CD14-positive monocyte (primary cell): ENCODE measurements at regions of chr2 and their contacts with region 1.

Region 1: GRCh38 chr2:55718165-55719008 is 24.7 kb upstream of the PNPT1 start:
- DNase-seq: peak; percentile 13 to 45 (median 40)
- H3K4me3 ChIP-seq: no peak overlapping the region
- H3K4me3 Mint-ChIP-seq: no peak overlapping the region
- H3K27ac ChIP-seq: no peak overlapping the region
- H3K27ac Mint-ChIP-seq: no peak overlapping the region
- H3K4me1 ChIP-seq: no peaks in the 10 kb centered on the region
- H3K4me1 Mint-ChIP-seq: no peaks in the 10 kb centered on the region
- H3K27me3 ChIP-seq: no peaks in the 10 kb centered on the region
- H3K27me3 Mint-ChIP-seq: peaks cover 0 to 11% (median 2%) of the 10 kb centered on the region in 3 donors
- CTCF ChIP-seq: peak; percentile 85

Region 2: DNA sequence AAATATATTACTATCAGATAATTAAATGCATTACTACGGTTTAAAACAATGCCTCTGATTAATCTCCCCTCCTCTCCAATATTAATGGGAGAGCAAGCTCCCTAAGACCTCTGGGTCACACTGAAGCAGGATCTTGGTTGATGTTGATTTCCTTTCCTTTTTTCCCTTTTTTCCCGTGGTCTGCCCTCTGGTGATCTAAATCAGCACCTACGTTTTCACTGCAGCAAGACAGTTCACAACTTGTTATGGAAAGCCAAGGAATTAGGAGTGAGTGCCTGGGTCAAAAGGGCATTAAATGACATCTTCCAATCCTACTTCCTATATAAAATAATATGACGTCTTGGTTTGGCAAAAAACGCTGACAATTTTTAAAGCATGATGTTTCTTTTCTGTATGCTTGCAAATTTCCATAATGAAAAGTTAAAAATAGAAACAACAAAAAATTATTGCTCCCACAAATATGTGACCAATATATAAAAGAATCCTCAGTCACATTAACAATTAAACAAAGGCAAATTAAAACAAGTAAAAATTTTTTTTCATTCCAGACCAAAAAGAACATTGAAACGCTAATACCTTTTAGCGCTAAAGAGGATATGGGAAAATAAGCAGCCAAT is 206.8 kb before region 1 on chr2:
- intact Hi-C with region 1: no loop called
- DNase-seq: no peak
- H3K4me3 ChIP-seq: no peak overlapping the region
- H3K4me3 Mint-ChIP-seq: no peak overlapping the region
- H3K27ac ChIP-seq: no peak overlapping the region
- H3K27ac Mint-ChIP-seq: no peak overlapping the region
- H3K4me1 ChIP-seq: no peaks in the 10 kb centered on the region
- H3K4me1 Mint-ChIP-seq: no peaks in the 10 kb centered on the region
- H3K27me3 ChIP-seq: no peaks in the 10 kb centered on the region
- H3K27me3 Mint-ChIP-seq: peaks cover 0 to 2% (median 0%) of the 10 kb centered on the region in 3 donors
- CTCF ChIP-seq: no peak

Region 3: GRCh38 chr2:55636831-55637230 is 81.6 kb before region 1 on chr2:
- intact Hi-C with region 1: no loop called
- DNase-seq: no peak
- H3K4me3 ChIP-seq: no peak overlapping the region
- H3K4me3 Mint-ChIP-seq: no peak overlapping the region
- H3K27ac ChIP-seq: no peak overlapping the region
- H3K27ac Mint-ChIP-seq: no peak overlapping the region
- H3K4me1 ChIP-seq: no peaks in the 10 kb centered on the region
- H3K4me1 Mint-ChIP-seq: no peaks in the 10 kb centered on the region
- H3K27me3 ChIP-seq: no peaks in the 10 kb centered on the region
- H3K27me3 Mint-ChIP-seq: no peaks in the 10 kb centered on the region
- CTCF ChIP-seq: no peak

Region 4: DNA sequence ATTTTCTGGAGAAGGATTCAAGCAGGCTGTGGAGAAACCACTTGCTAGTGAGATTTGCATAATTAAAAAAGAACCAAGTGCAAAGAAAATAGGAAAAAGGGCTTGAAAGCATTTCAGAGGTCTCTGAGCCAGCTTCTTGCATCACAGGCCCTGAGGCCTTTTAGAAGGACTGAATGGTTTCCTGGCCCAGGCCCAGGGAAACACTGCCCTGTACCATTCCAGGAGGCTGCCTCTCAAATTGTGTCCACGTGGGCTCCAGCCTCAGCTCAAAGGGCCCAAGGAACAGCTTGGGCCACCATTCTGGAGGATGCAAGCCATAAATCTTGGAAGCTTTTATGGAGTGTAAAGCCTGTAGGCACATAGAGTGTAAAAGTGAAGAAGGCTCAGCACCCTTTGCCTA is 1804.9 kb after region 1 on chr2:
- intact Hi-C with region 1: loop called in 1 of 2 experiments (anchors 10 kb)
- DNase-seq: no peak
- H3K4me3 ChIP-seq: no peak overlapping the region
- H3K4me3 Mint-ChIP-seq: no peak overlapping the region
- H3K27ac ChIP-seq: no peak overlapping the region
- H3K27ac Mint-ChIP-seq: no peak overlapping the region
- H3K4me1 ChIP-seq: no peaks in the 10 kb centered on the region
- H3K4me1 Mint-ChIP-seq: peaks cover 7% of the 10 kb centered on the region
- H3K27me3 ChIP-seq: no peaks in the 10 kb centered on the region
- H3K27me3 Mint-ChIP-seq: peaks cover 0 to 1% (median 0%) of the 10 kb centered on the region in 3 donors
- CTCF ChIP-seq: no peak